HEK293 (cell line): ENCODE measurements at regions of chr5 and their contacts with region 1.

Region 1: GRCh38 chr5:171907725-171908343 is 98.6 kb downstream of the FBXW11 start:
- H3K4me3 ChIP-seq: no peak overlapping the region
- H3K27ac ChIP-seq: no peak overlapping the region
- H3K4me1 ChIP-seq: no peaks in the 10 kb centered on the region
- CTCF ChIP-seq: peak; percentile 38; the same call in 1 of the 2 replicates

Region 2: DNA sequence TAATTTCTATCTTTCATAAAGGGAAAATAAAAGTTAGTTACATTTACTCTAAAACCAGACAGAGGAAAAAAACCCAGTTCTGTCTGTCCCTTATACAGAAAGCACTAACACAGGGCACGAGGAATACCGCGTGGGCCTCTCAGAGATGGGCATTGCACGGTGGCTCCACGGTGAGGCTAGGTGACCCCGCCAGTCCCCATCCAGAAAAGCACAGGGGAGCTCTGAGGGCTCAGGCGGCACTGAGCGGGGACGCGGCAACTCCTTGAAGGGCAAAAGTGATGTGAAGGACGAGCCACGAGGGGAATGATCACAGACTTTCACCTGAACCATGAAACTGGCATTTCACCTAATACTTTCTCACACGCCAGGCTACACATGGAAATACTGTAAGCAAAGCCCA is 134.3 kb after region 1 on chr5:
- CTCF ChIA-PET with region 1: interaction called, 44 read pairs
- POLR2A ChIA-PET with region 1: interaction called, 3 read pairs
- H3K4me3 ChIP-seq: no peak overlapping the region
- H3K27ac ChIP-seq: no peak overlapping the region
- H3K4me1 ChIP-seq: no peaks in the 10 kb centered on the region; the same call in 1 of the 2 replicates
- CTCF ChIP-seq: no peak

Region 3: GRCh38 chr5:172194985-172195774 is 287.3 kb after region 1 on chr5:
- CTCF ChIA-PET with region 1: no interaction called
- POLR2A ChIA-PET with region 1: no interaction called
- H3K4me3 ChIP-seq: no peak overlapping the region
- H3K27ac ChIP-seq: no peak overlapping the region
- H3K4me1 ChIP-seq: 0 out of 2 replicates have a peak, but pooled peaks cover 3% of the 10 kb centered on the region
- CTCF ChIP-seq: no peak